BJ (cell line): ENCODE measurements at regions of chr14 and their contacts with region 1.

Region 1: DNA sequence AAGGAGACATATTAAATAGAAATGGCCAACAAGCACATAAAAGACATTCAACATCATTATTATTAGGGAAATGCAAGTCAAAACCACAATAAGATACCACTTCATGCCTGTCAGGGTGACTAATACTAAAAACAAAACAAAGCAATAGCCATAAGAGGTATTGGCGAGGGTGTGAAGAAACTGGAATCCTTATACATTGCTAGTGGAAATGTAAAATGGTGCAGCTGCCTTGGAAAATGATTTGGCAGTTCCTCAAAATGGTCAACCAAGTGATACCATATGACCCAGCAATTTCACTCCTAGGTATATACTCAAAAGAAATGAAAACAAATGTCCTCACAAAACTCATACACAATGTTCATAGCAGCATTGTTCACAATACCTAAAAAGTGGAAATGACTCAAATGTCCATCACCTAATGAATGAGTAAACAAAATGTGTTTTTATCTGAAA is 27.0 kb downstream of the GPR135 start:
- DNase-seq: no peak
- H3K4me3 ChIP-seq: no peak overlapping the region
- H3K27me3 ChIP-seq: no peaks in the 10 kb centered on the region
- CTCF ChIP-seq: no peak

Region 2: GRCh38 chr14:59132796-59133494 is 305.3 kb before region 1 on chr14:
- CTCF ChIA-PET with region 1: interaction called, 37 read pairs
- POLR2A ChIA-PET with region 1: no interaction called
- DNase-seq: no peak
- H3K4me3 ChIP-seq: no peak overlapping the region
- H3K27me3 ChIP-seq: 0 out of 2 replicates have a peak, but pooled peaks cover 2% of the 10 kb centered on the region
- CTCF ChIP-seq: no peak

Region 3: GRCh38 chr14:59189786-59190771 is 248.1 kb before region 1 on chr14:
- CTCF ChIA-PET with region 1: interaction called, 14 read pairs
- POLR2A ChIA-PET with region 1: no interaction called
- DNase-seq: peak; percentile 44
- H3K4me3 ChIP-seq: peak overlapping the region; percentile 95
- H3K27me3 ChIP-seq: peaks cover 12% of the 10 kb centered on the region
- CTCF ChIP-seq: 0 out of 2 replicates have a peak, but pooled peaks have one; percentile 21